Endothelial cell of umbilical vein (primary cell): ENCODE measurements at regions of chr1 and their contacts with region 1.

Region 1: GRCh38 chr1:116737020-116737854 is 17.0 kb upstream of the CD2 start:
- DNase-seq: peak; percentile 60
- H3K4me3 ChIP-seq: no peak overlapping the region
- H3K27ac ChIP-seq: no peak overlapping the region
- H3K4me1 ChIP-seq: no peaks in the 10 kb centered on the region
- H3K27me3 ChIP-seq: peaks cover 0 to 2% of the 10 kb centered on the region in 2 experiments
- CTCF ChIP-seq: peak; percentile 77 to 80
- POLR2A ChIP-seq: no peak

Region 2: GRCh38 chr1:116724765-116725375 is 12.4 kb before region 1 on chr1:
- CTCF ChIA-PET with region 1: interaction called, 38 read pairs
- POLR2A ChIA-PET with region 1: no interaction called
- dilution Hi-C with region 1: no loop called
- intact Hi-C with region 1: no loop called
- DNase-seq: peak; percentile 47
- H3K4me3 ChIP-seq: no peak overlapping the region
- H3K27ac ChIP-seq: no peak overlapping the region
- H3K4me1 ChIP-seq: peaks cover 8% of the 10 kb centered on the region
- H3K27me3 ChIP-seq: peaks cover 3 to 8% of the 10 kb centered on the region in 2 experiments
- CTCF ChIP-seq: peak; percentile 62 to 69
- POLR2A ChIP-seq: no peak

Region 3: GRCh38 chr1:116817582-116818064 is 80.4 kb after region 1 on chr1:
- CTCF ChIA-PET with region 1: interaction called, 13 read pairs
- POLR2A ChIA-PET with region 1: no interaction called
- dilution Hi-C with region 1: no loop called
- intact Hi-C with region 1: loop called (anchors 1 kb)
- DNase-seq: peak; percentile 54
- H3K4me3 ChIP-seq: no peak overlapping the region
- H3K27ac ChIP-seq: no peak overlapping the region
- H3K4me1 ChIP-seq: no peaks in the 10 kb centered on the region
- H3K27me3 ChIP-seq: peaks cover 0 to 7% of the 10 kb centered on the region in 2 experiments
- CTCF ChIP-seq: peak; percentile 66 to 73
- POLR2A ChIP-seq: no peak

Region 4: DNA sequence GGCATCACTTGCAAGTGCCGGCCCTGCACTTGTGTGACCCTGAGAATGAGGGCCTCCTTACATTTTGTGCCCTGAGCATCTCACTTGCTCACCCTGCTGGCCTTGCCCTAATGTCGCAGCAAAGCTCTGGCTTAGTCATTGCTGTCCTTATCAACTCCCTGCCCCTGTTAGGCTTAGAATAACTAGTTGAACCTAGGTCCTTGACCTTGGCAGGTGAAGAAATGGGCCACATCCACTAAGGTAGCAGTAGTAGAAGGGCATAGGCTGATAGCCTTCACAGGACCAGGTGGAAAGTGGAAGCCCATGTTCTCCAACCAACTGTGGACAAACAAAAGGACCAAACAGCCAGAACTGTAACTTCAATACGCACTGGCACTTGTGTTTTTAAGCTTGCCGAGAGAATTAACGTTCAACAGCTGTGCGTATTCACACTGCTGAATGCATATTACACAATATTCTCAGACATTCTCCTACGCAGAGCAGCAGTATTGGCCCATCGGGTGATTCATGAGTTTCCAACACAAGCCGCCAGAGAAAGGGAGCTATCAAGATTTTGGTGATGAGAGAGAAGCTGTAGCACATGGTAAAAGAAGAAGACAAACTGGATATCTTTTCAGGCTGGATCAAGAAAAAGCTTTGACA is 144.8 kb after region 1 on chr1:
- CTCF ChIA-PET with region 1: interaction called, 37 read pairs
- POLR2A ChIA-PET with region 1: no interaction called
- dilution Hi-C with region 1: no loop called
- intact Hi-C with region 1: loop called (anchors 1 kb)
- DNase-seq: peak; percentile 26
- H3K4me3 ChIP-seq: no peak overlapping the region
- H3K27ac ChIP-seq: no peak overlapping the region
- H3K4me1 ChIP-seq: peaks cover 26% of the 10 kb centered on the region
- H3K27me3 ChIP-seq: no peaks in the 10 kb centered on the region
- CTCF ChIP-seq: peak; percentile 12 to 27
- POLR2A ChIP-seq: no peak

Region 5: GRCh38 chr1:117051224-117052064 is 314.2 kb after region 1 on chr1:
- CTCF ChIA-PET with region 1: interaction called, 91 read pairs
- POLR2A ChIA-PET with region 1: no interaction called
- dilution Hi-C with region 1: no loop called
- intact Hi-C with region 1: loop called (anchors 1 kb)
- DNase-seq: peak; percentile 32
- H3K4me3 ChIP-seq: no peak overlapping the region
- H3K27ac ChIP-seq: peak overlapping the region; percentile 16
- H3K4me1 ChIP-seq: peaks cover 6% of the 10 kb centered on the region
- H3K27me3 ChIP-seq: no peaks in the 10 kb centered on the region
- CTCF ChIP-seq: no peak
- POLR2A ChIP-seq: no peak